WTC11 (cell line): ENCODE measurements at regions of chr1 and their contacts with region 1.

Region 1: GRCh38 chr1:202154766-202155477 is 5.5 kb downstream of the PTPN7 start:
- DNase-seq: peak; percentile 74
- ATAC-seq: peak; percentile 88
- H3K4me3 Mint-ChIP-seq: no peak overlapping the region
- H3K27ac Mint-ChIP-seq: peak overlapping the region; percentile 89
- H3K4me1 Mint-ChIP-seq: peaks cover 22% of the 10 kb centered on the region
- H3K27me3 Mint-ChIP-seq: no peaks in the 10 kb centered on the region
- CTCF ChIP-seq: peak; percentile 56

Region 2: GRCh38 chr1:201399352-201400126 is 755.4 kb before region 1 on chr1:
- CTCF ChIA-PET with region 1: no interaction called
- POLR2A ChIA-PET with region 1: no interaction called
- DNase-seq: peak; percentile 76
- ATAC-seq: peak; percentile 68
- H3K4me3 Mint-ChIP-seq: peak overlapping the region; percentile 62
- H3K27ac Mint-ChIP-seq: no peak overlapping the region
- H3K4me1 Mint-ChIP-seq: peaks cover 26% of the 10 kb centered on the region
- H3K27me3 Mint-ChIP-seq: peaks cover 8% of the 10 kb centered on the region; the same call in 1 of the 2 replicates
- CTCF ChIP-seq: no peak

Region 3: GRCh38 chr1:202135221-202135721 is 19.7 kb before region 1 on chr1:
- CTCF ChIA-PET with region 1: interaction called, 36 read pairs
- POLR2A ChIA-PET with region 1: no interaction called
- DNase-seq: peak; percentile 62
- ATAC-seq: peak; percentile 77
- H3K4me3 Mint-ChIP-seq: no peak overlapping the region
- H3K27ac Mint-ChIP-seq: peak overlapping the region; percentile 60; the same call in 1 of the 2 replicates
- H3K4me1 Mint-ChIP-seq: peaks cover 23% of the 10 kb centered on the region
- H3K27me3 Mint-ChIP-seq: no peaks in the 10 kb centered on the region
- CTCF ChIP-seq: peak; percentile 75

Region 4: DNA sequence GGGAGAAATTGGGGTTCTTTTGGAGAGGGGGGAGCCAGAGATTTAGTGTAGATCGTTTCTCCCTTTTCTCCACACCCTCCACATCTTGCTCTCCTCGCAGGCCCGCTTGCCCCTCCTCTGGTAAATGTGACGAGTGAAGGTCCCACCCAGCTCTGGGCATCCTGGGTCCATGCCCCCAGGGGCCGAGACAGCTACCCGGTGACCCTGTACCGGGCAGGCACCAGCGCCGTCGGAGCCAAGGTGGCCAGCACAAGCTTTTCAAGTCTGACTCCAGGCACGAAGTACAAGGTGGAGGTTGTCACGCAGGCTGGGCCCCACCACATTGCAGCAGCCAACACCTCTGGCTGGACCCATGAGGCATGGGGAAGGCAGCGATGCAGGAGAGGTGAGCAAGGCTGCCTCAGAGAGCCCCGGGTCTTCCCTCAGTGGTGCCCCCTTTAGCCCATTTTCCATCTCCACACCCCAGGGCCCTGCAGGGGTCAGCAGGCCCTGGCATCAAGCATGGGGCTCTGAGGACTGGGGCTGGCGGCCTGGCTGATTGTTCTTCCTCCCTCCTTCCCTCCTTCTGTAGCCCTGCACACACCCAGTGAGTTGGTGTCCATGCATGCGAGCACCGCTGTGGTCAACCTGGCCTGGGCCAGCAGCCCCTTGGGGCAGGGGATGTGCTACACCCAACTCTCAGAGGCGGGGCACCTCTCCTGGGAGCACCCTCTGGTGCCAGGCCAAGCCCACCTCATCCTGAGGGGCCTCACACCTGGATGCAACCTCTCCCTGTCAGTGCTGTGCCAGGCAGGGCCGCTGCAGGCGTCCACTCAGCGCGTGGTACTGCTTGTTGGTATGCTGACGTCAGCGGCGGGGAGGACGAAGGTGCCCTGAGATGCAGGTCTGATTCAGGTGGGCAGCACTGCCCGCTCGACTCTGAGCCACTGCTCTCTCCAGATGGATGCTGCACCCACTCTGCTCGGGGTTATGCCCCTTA is 22.3 kb after region 1 on chr1:
- CTCF ChIA-PET with region 1: interaction called, 23 read pairs
- POLR2A ChIA-PET with region 1: no interaction called
- DNase-seq: no peak
- ATAC-seq: peak; percentile 85
- H3K4me3 Mint-ChIP-seq: no peak overlapping the region
- H3K27ac Mint-ChIP-seq: no peak overlapping the region
- H3K4me1 Mint-ChIP-seq: no peaks in the 10 kb centered on the region
- H3K27me3 Mint-ChIP-seq: no peaks in the 10 kb centered on the region
- CTCF ChIP-seq: no peak

Region 5: GRCh38 chr1:202210385-202210784 is 55.5 kb after region 1 on chr1:
- CTCF ChIA-PET with region 1: interaction called, 17 read pairs
- POLR2A ChIA-PET with region 1: no interaction called
- DNase-seq: peak; percentile 50
- ATAC-seq: peak; percentile 33
- H3K4me3 Mint-ChIP-seq: no peak overlapping the region
- H3K27ac Mint-ChIP-seq: no peak overlapping the region
- H3K4me1 Mint-ChIP-seq: peaks cover 9% of the 10 kb centered on the region
- H3K27me3 Mint-ChIP-seq: peaks cover 11% of the 10 kb centered on the region
- CTCF ChIP-seq: no peak